ENCODE measurements at regions of chr17 and their contacts with region 1.

Region 1: GRCh38 chr17:44533533-44534246 is 23.6 kb upstream of the FZD2 start:
- DNase-seq: peak; percentile 90
- H3K4me3 ChIP-seq: no peak overlapping the region
- H3K27ac ChIP-seq: no peak overlapping the region
- H3K4me1 ChIP-seq: peaks cover 14% of the 10 kb centered on the region
- CTCF ChIP-seq: peak; percentile 97

Region 2: DNA sequence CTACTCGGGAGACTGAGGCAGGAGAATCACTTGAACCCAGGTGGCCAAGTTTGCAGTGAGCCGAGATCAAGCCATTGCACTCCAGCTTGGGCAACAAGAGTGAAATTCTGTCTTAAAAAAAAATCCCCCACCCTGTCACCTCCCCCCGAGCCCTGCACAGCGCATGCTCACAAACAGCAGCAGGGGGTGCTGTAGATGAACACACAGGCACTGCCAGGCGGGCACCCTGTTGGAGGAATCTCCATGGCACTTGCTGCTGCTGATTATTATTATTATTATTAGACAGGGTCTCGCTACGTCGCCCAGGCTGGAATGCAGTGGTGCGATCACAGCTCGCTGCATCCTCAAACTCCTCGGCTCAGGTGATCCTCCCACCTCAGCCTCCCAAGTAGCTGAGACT is 48.2 kb after region 1 on chr17:
- CTCF ChIA-PET with region 1: no interaction called
- POLR2A ChIA-PET with region 1: no interaction called
- intact Hi-C with region 1: loop called (anchors 5 kb)
- DNase-seq: peak; percentile 37
- H3K4me3 ChIP-seq: no peak overlapping the region
- H3K27ac ChIP-seq: no peak overlapping the region
- H3K4me1 ChIP-seq: no peaks in the 10 kb centered on the region
- CTCF ChIP-seq: peak; percentile 57

Region 3: DNA sequence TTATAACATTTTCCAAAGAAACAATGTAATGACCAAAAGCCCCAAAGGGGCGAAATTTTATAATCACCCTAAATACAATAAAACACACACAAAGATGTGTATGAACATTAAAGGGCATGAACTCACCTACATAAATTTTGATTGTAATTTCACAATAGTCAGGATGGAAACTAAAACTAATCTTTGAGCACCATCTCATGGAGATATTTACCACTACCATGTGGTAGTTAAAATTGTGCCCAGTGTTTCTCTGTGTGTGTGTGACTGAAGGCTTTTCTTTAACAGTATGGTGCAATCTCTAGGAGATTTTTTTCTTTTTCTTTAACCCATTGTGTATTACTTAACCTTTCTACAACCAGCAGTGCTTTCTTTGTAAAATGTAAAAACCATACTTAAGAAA is 102.9 kb after region 1 on chr17:
- CTCF ChIA-PET with region 1: no interaction called
- POLR2A ChIA-PET with region 1: no interaction called
- intact Hi-C with region 1: loop called (anchors 1 kb)
- DNase-seq: peak; percentile 45
- H3K4me3 ChIP-seq: no peak overlapping the region
- H3K27ac ChIP-seq: no peak overlapping the region
- H3K4me1 ChIP-seq: no peaks in the 10 kb centered on the region
- CTCF ChIP-seq: peak; percentile 69

Region 4: DNA sequence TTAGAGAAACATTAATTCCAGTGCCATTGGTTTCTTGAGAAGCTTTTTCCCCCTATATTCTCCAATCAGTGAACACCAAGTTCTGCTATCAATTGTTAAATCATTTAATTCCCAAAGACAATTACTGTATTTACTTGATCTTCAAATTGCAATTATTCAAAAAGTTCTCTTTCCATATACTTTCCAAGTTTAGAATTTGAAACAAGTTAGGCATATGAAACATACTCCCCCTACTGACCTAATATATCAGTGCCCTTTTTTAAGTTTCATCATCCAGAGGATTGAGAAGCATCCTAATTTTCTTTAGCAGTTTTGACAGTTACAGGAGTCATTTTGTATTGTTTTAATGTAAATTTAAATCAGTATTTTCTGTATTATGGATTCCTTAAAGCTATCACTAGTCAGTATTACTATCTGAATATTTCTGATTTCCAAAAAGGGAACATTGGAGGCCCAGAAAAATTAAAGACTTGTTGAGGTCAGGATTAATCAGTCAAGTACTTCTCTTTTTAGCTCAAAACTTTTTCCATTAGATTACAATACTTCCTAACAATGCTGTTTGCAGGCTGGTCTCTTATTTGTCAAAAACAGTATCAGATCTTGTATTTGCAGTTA is 138.9 kb after region 1 on chr17:
- CTCF ChIA-PET with region 1: no interaction called
- POLR2A ChIA-PET with region 1: no interaction called
- intact Hi-C with region 1: loop called (anchors 1 kb)
- DNase-seq: peak; percentile 42
- H3K4me3 ChIP-seq: no peak overlapping the region
- H3K27ac ChIP-seq: no peak overlapping the region
- H3K4me1 ChIP-seq: no peaks in the 10 kb centered on the region
- CTCF ChIP-seq: peak; percentile 91

Region 5: GRCh38 chr17:44689477-44690217 is 156.0 kb after region 1 on chr17 and contains the start of gene CCDC43:
- CTCF ChIA-PET with region 1: no interaction called
- POLR2A ChIA-PET with region 1: no interaction called
- intact Hi-C with region 1: no loop called
- DNase-seq: peak; percentile 92
- H3K4me3 ChIP-seq: peak within 1 kb of the TSS; percentile 91
- H3K27ac ChIP-seq: peak within 1 kb of the TSS; percentile 61
- H3K4me1 ChIP-seq: peaks cover 21% of the 10 kb centered on the region
- CTCF ChIP-seq: no peak
- total RNA-seq, gene CCDC43: 33.2 and 42.4 TPM in 2 replicates

Measured in OCI-LY7 (cell line).